ENCODE measurements at regions of chr1 and their contacts with region 1.

Region 1: GRCh38 chr1:21344750-21345443 is 54.6 kb upstream of the ECE1 start:
- DNase-seq: no peak
- H3K4me3 ChIP-seq: peak overlapping the region; percentile 77 to 85
- H3K27ac ChIP-seq: peak overlapping the region; percentile 87 to 92
- H3K4me1 ChIP-seq: peaks cover 34% of the 10 kb centered on the region
- H3K27me3 ChIP-seq: no peaks in the 10 kb centered on the region
- CTCF ChIP-seq: no peak
- POLR2A ChIP-seq: no peak

Region 2: GRCh38 chr1:21261551-21262281 is 83.2 kb before region 1 on chr1:
- intact Hi-C with region 1: loop called (anchors 5 kb)
- DNase-seq: no peak
- H3K4me3 ChIP-seq: no peak overlapping the region
- H3K27ac ChIP-seq: peak overlapping the region; percentile 73 to 84
- H3K4me1 ChIP-seq: peaks cover 11% of the 10 kb centered on the region
- H3K27me3 ChIP-seq: no peaks in the 10 kb centered on the region
- CTCF ChIP-seq: no peak
- POLR2A ChIP-seq: no peak

Region 3: DNA sequence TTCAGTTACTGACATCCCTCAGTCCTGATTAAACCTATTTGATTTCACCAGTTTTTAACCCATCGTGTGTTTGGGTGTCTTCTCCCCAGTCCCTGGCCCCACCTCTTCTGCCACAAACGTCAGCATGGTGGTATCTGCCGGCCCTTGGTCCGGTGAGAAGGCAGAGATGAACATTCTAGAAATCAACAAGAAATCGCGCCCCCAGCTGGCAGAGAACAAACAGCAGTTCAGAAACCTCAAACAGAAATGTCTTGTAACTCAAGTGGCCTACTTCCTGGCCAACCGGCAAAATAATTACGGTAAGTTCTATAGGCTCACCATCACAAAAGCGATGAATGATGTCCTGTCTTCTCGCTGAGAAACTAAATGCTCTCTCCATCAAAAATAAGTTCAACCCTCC is 123.7 kb after region 1 on chr1:
- intact Hi-C with region 1: no loop called
- DNase-seq: no peak
- H3K4me3 ChIP-seq: no peak overlapping the region
- H3K27ac ChIP-seq: no peak overlapping the region
- H3K4me1 ChIP-seq: no peaks in the 10 kb centered on the region
- H3K27me3 ChIP-seq: no peaks in the 10 kb centered on the region
- CTCF ChIP-seq: peak in 1 of 4 experiments; percentile 7
- POLR2A ChIP-seq: no peak

Region 4: DNA sequence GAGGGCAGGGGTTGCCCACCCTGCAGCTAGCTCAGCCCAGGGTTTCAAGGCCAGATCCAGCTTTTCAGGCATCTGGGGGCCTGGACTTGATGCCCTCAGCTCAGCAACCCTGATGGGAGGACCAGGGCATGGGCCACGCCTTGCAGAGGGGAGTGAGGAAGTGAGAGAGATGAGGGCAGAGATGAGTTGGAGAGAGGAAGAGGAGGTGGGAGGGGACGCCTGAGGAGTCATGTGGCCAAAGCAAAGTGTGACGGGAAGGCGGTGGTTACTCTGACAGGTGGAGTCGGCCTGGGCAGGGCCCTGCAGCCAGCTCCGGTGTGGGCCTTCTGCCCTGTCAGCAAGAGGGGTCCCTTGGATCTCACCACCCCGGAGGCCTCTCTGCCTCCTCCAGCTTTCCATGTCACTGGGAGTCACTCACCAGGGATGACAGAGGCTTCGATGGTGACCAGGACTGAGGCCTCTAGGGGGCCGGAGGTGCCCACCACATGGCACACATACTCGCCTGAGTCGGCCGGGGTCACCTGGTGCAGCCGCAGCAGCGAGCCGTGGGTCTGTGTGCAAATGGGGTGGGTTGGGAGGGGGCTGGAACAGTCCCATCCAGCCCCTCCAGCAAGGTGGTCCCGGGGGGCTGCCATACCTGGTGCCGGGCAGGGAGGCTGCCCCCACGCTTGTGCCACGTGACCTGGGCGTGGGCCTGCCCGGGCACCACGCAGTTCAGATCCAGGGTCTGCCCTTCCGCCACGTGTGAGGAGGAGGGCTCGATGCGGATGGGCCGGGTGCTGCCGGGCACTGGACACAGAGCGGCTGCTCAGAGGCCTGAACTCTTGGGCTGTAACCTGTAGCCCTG is 507.6 kb after region 1 on chr1:
- intact Hi-C with region 1: no loop called
- DNase-seq: no peak
- H3K4me3 ChIP-seq: no peak overlapping the region
- H3K27ac ChIP-seq: no peak overlapping the region
- H3K4me1 ChIP-seq: no peaks in the 10 kb centered on the region
- H3K27me3 ChIP-seq: no peaks in the 10 kb centered on the region
- CTCF ChIP-seq: no peak
- POLR2A ChIP-seq: no peak

Measured in prostate gland (tissue), 2 donors.